A549 (cell line): ENCODE measurements at regions of chr2 and their contacts with region 1.

Region 1: DNA sequence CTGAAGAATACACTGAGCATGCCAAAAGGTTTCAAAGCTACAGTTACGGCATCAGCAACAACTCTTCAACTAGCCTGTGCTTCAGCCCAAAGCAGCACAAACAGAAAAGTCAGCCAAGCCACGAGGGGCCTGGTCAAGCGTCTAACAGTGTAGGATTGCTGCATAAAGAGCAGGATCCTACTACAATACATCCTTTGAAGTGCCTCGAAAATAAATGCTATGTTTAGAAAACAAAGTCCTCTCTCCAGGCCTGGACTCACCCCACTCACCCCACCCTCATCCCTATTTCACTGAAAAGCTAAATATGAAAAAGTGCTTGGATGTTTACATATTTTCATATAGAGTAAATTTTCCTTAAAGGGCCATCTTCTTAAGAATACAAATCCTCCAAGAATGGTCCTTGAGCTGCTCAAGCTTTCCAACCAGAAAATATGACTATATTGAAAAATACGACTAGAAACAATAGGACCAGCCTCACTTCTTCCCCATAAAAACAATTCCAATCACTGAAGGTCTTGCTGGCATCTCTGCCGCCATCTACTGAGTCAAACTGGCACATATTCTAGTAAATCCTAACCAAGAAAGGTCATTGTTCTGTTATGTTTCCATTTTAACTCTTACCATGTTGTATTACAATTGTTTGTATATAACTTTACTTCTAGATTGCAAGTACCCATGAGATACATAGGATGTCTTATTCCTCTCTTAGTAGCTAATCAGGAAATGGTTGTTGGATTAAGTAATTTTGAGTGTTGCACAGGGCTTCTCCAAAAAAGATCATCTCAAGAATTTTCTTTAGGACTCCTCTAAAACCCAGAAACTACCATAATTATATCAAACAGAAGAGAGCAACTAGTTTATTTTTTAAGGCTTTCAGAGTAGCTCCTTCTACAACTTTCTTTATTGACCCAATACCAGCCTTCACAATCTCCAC is 63.6 kb downstream of the CLHC1 start:
- DNase-seq: peak; percentile 69 to 77
- ATAC-seq: peak; percentile 81 to 84
- H3K4me3 ChIP-seq: no peak overlapping the region
- H3K27ac ChIP-seq: peak overlapping the region; percentile 12 to 59; a peak in 4 of 6 replicates
- H3K4me1 ChIP-seq: peaks cover 38% of the 10 kb centered on the region
- CTCF ChIP-seq: peak; percentile 98
- EP300 ChIP-seq: no peak
- POLR2A ChIP-seq: no peak
- RAD21 ChIP-seq: peak; percentile 98 to 99

Region 2: DNA sequence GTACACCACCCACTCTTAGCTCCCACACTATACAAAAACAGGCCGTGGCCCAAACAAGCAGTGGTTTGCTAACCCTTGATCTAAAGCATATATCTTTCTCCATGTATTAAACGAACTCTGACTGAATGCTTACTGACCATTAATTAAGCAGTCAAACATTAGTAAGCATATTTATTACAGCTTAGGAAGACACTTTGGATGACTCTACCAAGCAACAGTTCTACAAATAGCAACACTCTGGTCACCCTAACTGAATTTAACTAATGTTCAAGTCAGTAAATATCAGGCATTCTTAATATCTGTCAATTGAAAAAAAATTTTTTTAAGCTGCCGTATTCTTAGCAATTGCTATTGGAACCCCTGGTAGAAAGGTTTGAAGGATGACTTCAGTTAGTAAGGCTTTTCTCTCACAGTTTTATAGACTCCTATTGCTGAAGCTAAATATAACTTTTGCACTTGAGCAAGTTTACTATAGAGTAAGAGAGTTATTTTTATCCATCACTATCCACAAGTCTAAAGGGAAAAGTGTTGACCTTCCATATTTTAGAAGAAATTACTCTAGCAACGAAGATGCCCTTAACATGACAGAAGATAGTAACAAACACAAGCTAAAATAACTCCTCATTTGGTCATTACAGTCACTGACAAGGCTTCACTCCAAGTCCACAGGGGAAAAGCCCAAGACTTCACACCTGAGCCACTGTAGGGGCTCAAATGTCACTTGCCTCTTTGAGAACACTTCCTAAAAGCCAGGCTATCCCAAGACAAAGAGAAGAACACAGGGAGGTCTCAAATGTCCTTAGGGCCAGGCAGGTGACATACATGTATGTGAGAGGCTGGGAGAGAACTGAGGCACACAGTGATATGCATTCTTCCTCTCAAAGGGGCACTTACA is 192.6 kb before region 1 on chr2:
- CTCF ChIA-PET with region 1: interaction called, 15 read pairs
- POLR2A ChIA-PET with region 1: no interaction called
- DNase-seq: no peak
- ATAC-seq: peak in 1 of 2 experiments; percentile 17; a peak in 1 of 6 replicates
- H3K4me3 ChIP-seq: no peak overlapping the region
- H3K27ac ChIP-seq: no peak overlapping the region
- H3K4me1 ChIP-seq: peaks cover 19% of the 10 kb centered on the region; the same call in 1 of the 3 replicates
- CTCF ChIP-seq: no peak
- EP300 ChIP-seq: no peak
- POLR2A ChIP-seq: no peak
- RAD21 ChIP-seq: no peak

Region 3: GRCh38 chr2:55033066-55033742 is 135.3 kb before region 1 on chr2:
- CTCF ChIA-PET with region 1: interaction called, 23 read pairs
- POLR2A ChIA-PET with region 1: no interaction called
- DNase-seq: no peak
- ATAC-seq: peak in 1 of 2 experiments; percentile 24; a peak in 1 of 6 replicates
- H3K4me3 ChIP-seq: no peak overlapping the region
- H3K27ac ChIP-seq: no peak overlapping the region
- H3K4me1 ChIP-seq: peaks cover 39% of the 10 kb centered on the region
- CTCF ChIP-seq: no peak
- EP300 ChIP-seq: no peak
- POLR2A ChIP-seq: no peak
- RAD21 ChIP-seq: no peak

Region 4: DNA sequence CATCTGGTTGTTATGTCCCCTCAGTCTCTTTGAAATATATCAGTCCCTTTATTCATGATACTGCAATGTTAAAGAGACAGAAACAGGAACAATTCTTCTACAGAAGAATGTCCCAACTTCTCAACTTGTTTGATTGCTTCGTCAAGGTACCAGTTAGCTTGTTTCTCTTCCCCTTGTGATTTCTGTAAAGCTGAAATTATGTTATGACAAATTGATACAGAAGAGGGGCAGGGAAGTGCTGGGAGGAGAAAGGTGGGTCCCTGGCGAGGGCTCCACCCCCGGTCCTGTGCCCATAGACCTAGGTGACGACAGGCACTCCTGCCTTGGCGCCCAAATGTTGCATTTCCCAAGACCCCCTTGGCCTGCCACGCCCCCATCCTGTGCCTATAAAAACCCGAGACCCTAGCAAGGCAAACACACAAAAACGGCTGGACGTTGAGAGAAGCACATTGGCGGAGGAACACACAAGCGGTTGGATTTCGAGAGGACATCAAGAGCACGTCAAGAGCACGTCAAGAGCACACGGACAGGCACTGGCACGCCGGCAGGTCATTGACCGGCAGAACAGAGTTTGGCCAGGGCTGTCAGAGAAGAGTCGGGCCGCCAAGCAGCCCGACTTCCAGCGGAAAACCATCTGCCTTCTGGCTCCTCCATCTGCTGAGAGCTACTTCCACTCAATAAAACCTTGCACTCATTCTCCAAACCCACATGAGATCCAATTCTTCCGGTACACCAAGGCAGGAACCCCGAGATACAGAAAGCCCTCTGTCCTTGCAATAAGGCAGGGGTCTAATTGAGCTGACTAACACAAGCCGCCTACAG is 106.8 kb before region 1 on chr2:
- CTCF ChIA-PET with region 1: interaction called, 22 read pairs
- POLR2A ChIA-PET with region 1: no interaction called
- DNase-seq: no peak
- ATAC-seq: no peak
- H3K4me3 ChIP-seq: no peak overlapping the region
- H3K27ac ChIP-seq: no peak overlapping the region
- H3K4me1 ChIP-seq: no peaks in the 10 kb centered on the region; the same call in 2 of the 3 replicates
- CTCF ChIP-seq: no peak
- EP300 ChIP-seq: no peak
- POLR2A ChIP-seq: no peak
- RAD21 ChIP-seq: no peak

Region 5: GRCh38 chr2:55111570-55112228 is 56.8 kb before region 1 on chr2:
- CTCF ChIA-PET with region 1: interaction called, 148 read pairs
- POLR2A ChIA-PET with region 1: no interaction called
- DNase-seq: peak; percentile 44 to 84
- ATAC-seq: peak; percentile 74 to 75
- H3K4me3 ChIP-seq: no peak overlapping the region
- H3K27ac ChIP-seq: peak overlapping the region; percentile 92 to 93
- H3K4me1 ChIP-seq: peaks cover 94% of the 10 kb centered on the region
- CTCF ChIP-seq: no peak
- EP300 ChIP-seq: no peak
- POLR2A ChIP-seq: no peak
- RAD21 ChIP-seq: peak in 1 of 2 experiments; percentile 41; a peak in 2 of 5 replicates

Region 6: DNA sequence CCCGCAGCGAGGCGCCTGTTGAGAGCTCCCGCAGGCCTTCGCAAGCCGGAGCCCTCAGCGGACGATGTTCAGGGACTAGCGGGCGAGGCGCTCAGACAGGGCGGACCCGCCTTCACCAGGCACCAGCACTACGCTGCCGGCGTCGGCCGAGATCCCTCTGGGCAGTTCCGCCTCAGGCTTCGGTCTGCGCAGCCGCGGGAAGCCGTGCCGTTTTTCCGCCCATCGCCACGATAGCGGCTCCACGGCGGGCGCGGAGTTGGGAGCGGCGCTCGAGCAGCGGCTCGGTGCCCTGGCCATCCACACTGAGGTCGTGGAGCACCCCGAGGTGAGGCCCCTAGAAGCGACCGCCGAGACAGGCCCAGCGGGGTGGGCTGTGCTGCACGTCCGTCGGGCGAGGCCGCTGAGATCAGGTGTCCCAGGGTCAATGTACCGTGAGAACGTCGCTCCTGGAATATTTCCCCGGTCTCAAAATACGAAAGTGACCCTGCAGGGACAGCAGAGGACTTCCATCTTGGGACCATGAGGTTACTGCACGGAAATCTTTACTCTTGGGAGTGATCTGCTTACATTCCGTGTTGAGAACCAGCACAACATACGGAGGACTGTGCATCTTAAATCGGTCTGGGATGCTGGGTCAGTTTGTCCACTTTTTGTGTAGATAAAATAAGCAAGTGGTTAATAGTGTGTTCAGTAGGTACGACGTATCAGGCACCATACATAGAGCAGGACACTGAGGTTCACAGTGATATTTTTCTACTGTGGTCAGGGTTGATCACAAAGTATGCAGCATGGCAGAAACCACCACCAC is 113.8 kb after region 1 on chr2:
- CTCF ChIA-PET with region 1: no interaction called
- POLR2A ChIA-PET with region 1: no interaction called
- DNase-seq: peak; percentile 61 to 89
- ATAC-seq: peak; percentile 98
- H3K4me3 ChIP-seq: peak overlapping the region; percentile 51
- H3K27ac ChIP-seq: peak overlapping the region; percentile 87 to 90
- H3K4me1 ChIP-seq: peaks cover 8% of the 10 kb centered on the region; the same call in 2 of the 3 replicates
- CTCF ChIP-seq: no peak
- EP300 ChIP-seq: no peak
- POLR2A ChIP-seq: peak; percentile 95
- RAD21 ChIP-seq: no peak; a peak in 2 of 5 replicates